Naive thymus-derived CD8-positive, alpha-beta T cell (primary cell): ENCODE measurements at regions of chr7 and their contacts with region 1.

Region 1: DNA sequence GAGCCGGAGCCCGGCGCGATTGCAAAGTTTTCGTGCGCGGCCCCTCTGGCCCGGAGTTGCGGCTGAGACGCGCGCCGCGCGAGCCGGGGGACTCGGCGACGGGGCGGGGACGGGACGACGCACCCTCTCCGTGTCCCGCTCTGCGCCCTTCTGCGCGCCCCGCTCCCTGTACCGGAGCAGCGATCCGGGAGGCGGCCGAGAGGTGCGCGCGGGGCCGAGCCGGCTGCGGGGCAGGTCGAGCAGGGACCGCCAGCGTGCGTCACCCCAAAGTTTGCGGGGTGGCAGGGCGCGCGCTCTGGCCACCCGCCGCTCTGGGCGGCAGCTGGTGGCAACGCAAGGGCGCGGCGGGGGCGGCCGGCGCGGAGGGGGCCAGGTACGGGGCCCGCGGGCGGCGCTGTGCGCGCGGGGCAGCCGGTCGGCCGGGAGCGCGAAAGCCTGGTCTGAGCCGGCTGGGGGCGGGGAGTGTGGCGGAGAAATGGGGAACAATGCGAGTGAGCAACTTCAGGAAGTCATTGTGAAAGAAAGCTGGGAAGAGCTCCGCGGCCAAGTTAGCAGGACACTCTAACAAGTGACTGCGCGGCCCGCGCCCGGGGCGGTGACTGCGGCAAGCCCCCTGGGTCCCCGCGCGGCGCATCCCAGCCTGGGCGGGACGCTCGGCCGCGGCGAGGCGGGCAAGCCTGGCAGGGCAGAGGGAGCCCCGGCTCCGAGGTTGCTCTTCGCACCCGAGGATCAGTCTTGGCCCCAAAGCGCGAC is at the start of gene IKZF1:
- DNase-seq: peak in 8 of 10 donors; percentile 51 to 70 (median 61)
- ATAC-seq: peak; percentile 34 to 41
- H3K4me3 Mint-ChIP-seq: peak within 1 kb of the TSS; percentile 88 to 100 (median 100)
- H3K27ac Mint-ChIP-seq: peak within 1 kb of the TSS; percentile 89 to 100 (median 98)
- H3K4me1 Mint-ChIP-seq: peaks cover 31 to 68% (median 54%) of the 10 kb centered on the region in 4 donors
- H3K27me3 Mint-ChIP-seq: no peaks in the 10 kb centered on the region
- polyA plus RNA-seq, gene IKZF1: 145 to 257 (median 209) TPM

Region 2: GRCh38 chr7:50212666-50213621 is 91.4 kb before region 1 on chr7:
- POLR2A ChIA-PET with region 1: interaction called, 442 read pairs
- DNase-seq: peak in 2 of 10 donors; percentile 31 to 43
- ATAC-seq: peak; percentile 57 to 68
- H3K4me3 Mint-ChIP-seq: peak overlapping the region; percentile 46 to 82 (median 66)
- H3K27ac Mint-ChIP-seq: peak overlapping the region; percentile 61 to 93 (median 84)
- H3K4me1 Mint-ChIP-seq: peaks cover 58 to 97% (median 95%) of the 10 kb centered on the region in 4 donors
- H3K27me3 Mint-ChIP-seq: no peaks in the 10 kb centered on the region

Region 3: GRCh38 chr7:50281680-50282445 is 22.5 kb before region 1 on chr7:
- POLR2A ChIA-PET with region 1: interaction called, 14 read pairs
- DNase-seq: peak in 5 of 10 donors; percentile 35 to 54 (median 42)
- ATAC-seq: peak; percentile 84 to 94
- H3K4me3 Mint-ChIP-seq: peak overlapping the region; percentile 60 to 90 (median 82)
- H3K27ac Mint-ChIP-seq: peak overlapping the region; percentile 84 to 99 (median 94)
- H3K4me1 Mint-ChIP-seq: peaks cover 28 to 83% (median 74%) of the 10 kb centered on the region in 4 donors
- H3K27me3 Mint-ChIP-seq: no peaks in the 10 kb centered on the region

Region 4: GRCh38 chr7:50317221-50317678 is 12.9 kb after region 1 on chr7:
- POLR2A ChIA-PET with region 1: interaction called, 256 read pairs
- DNase-seq: peak in 9 of 10 donors; percentile 43 to 89 (median 69)
- ATAC-seq: peak; percentile 66 to 80
- H3K4me3 Mint-ChIP-seq: peak overlapping the region; percentile 81 to 100 (median 100)
- H3K27ac Mint-ChIP-seq: peak overlapping the region in 9 of 10 donors; percentile 91 to 100 (median 99)
- H3K4me1 Mint-ChIP-seq: peaks cover 42 to 99% (median 94%) of the 10 kb centered on the region in 4 donors
- H3K27me3 Mint-ChIP-seq: no peaks in the 10 kb centered on the region

Region 5: DNA sequence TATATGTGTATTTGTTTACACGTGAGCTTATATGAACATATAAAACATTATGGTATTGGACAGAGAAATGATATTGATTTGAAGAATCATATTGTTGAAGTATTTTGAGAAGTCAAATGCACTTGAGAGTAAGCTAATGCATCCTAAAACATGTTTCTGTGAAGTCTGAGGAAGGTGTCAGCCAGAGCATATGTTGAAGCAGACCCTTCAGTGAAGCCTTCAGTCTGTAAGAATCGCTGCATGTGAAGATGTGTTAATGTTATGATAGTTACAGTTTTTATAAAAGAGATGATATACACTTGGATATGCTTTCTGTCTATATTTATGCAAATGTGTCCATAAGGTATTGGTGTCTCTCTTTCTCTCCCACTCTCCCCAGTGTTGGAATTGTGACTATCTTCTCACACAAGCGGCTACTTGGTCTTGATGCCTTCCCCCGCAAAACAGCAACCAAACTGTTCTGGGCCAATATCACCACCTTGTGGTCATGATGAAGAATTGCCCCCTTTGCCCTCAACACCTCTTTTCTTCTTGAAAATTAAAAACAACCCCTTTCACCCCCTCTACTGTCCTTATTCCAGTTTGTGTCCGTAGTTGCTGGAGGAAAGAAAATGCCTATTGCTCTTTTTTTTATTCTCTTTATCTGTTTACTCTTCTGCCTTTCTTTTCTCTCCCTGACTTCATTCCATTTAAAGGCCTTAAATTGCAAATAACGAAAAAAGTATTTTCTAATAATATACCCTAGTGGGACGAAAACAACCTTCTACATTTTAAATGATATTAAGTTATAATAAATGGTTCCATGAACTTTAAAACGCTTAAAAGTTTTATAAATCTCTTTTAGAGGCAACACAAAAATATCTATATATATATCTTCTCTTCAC is 65.1 kb after region 1 on chr7:
- POLR2A ChIA-PET with region 1: interaction called, 1,553 read pairs
- DNase-seq: peak in 8 of 10 donors; percentile 49 to 86 (median 72)
- ATAC-seq: peak; percentile 44 to 66
- H3K4me3 Mint-ChIP-seq: peak overlapping the region in 9 of 10 donors; percentile 45 to 82 (median 61)
- H3K27ac Mint-ChIP-seq: peak overlapping the region in 9 of 10 donors; percentile 37 to 100 (median 89)
- H3K4me1 Mint-ChIP-seq: peaks cover 42 to 99% (median 96%) of the 10 kb centered on the region in 4 donors
- H3K27me3 Mint-ChIP-seq: no peaks in the 10 kb centered on the region